CD14-positive monocyte (primary cell): ENCODE measurements at regions of chr10 and their contacts with region 1.

Region 1: DNA sequence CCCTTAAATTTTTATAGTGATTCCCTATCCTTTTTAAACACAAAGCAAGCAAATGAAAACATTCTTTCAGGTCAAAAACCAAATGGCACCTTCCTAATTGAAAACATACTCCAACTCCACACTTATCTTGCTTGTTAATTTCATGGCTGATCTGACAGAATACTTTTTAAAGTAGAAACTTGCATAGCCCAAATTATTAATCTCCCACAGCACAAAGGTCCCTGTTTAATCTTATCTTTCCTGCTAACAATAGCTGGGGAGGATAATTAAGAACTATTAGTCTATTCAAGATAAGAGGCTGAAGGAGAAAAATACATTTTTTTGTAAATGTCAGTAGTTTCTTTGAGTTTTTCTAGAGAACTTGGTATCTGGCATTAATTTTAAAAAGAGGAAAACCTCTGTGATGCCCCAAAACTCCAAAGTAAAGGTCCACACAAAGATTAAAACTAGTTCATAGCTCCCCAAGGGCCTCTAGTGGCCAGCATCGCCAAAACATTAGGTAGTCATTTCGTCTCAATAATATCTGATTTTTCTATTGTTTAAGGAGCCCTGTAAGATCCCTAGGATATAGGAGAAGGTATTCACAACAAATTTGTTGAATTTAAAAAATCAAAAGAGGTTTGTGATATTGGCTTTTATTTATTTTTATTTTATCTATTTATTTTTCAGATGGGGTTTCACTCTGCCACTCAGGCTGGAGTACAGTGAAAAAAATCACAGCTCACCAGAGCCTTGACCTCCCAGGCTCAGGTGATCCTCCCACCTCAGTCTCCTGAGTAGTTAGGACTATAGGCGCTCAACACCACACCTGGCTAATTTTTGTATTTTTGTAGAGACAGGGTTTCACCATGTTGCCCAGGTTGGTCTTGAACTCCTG is 14.7 kb downstream of the CDNF start:
- DNase-seq: peak; percentile 16 to 43 (median 31)
- H3K4me3 ChIP-seq: no peak overlapping the region
- H3K4me3 Mint-ChIP-seq: no peak overlapping the region
- H3K27ac ChIP-seq: no peak overlapping the region
- H3K27ac Mint-ChIP-seq: no peak overlapping the region
- H3K4me1 ChIP-seq: peaks cover 12% of the 10 kb centered on the region in 2 donors
- H3K4me1 Mint-ChIP-seq: peaks cover 22% of the 10 kb centered on the region
- H3K27me3 ChIP-seq: no peaks in the 10 kb centered on the region
- H3K27me3 Mint-ChIP-seq: peaks cover 0 to 3% (median 0%) of the 10 kb centered on the region in 3 donors
- CTCF ChIP-seq: peak; percentile 66

Region 2: GRCh38 chr10:14507176-14507575 is 315.9 kb before region 1 on chr10:
- intact Hi-C with region 1: loop called in 1 of 2 experiments (anchors 10 kb)
- DNase-seq: no peak
- H3K4me3 ChIP-seq: no peak overlapping the region
- H3K4me3 Mint-ChIP-seq: no peak overlapping the region
- H3K27ac ChIP-seq: no peak overlapping the region
- H3K27ac Mint-ChIP-seq: no peak overlapping the region
- H3K4me1 ChIP-seq: no peaks in the 10 kb centered on the region
- H3K4me1 Mint-ChIP-seq: peaks cover 4% of the 10 kb centered on the region
- H3K27me3 ChIP-seq: no peaks in the 10 kb centered on the region
- H3K27me3 Mint-ChIP-seq: peaks cover 0 to 1% (median 0%) of the 10 kb centered on the region in 3 donors
- CTCF ChIP-seq: no peak

Region 3: GRCh38 chr10:14536241-14537213 is 286.6 kb before region 1 on chr10:
- intact Hi-C with region 1: loop called (anchors 10 kb)
- DNase-seq: peak; percentile 49 to 69 (median 66)
- H3K4me3 ChIP-seq: no peak overlapping the region
- H3K4me3 Mint-ChIP-seq: no peak overlapping the region
- H3K27ac ChIP-seq: peak overlapping the region in 1 of 2 donors; percentile 39
- H3K27ac Mint-ChIP-seq: peak overlapping the region in 6 of 7 donors; percentile 3 to 88 (median 42)
- H3K4me1 ChIP-seq: peaks cover 5 to 8% of the 10 kb centered on the region in 2 donors
- H3K4me1 Mint-ChIP-seq: peaks cover 22% of the 10 kb centered on the region
- H3K27me3 ChIP-seq: no peaks in the 10 kb centered on the region
- H3K27me3 Mint-ChIP-seq: no peaks in the 10 kb centered on the region
- CTCF ChIP-seq: peak; percentile 68

Region 4: GRCh38 chr10:14604181-14605142 is 218.7 kb before region 1 on chr10:
- intact Hi-C with region 1: loop called in 1 of 2 experiments (anchors 5 kb)
- DNase-seq: peak; percentile 61 to 84 (median 82)
- H3K4me3 ChIP-seq: peak overlapping the region; percentile 75 to 100 (median 81)
- H3K4me3 Mint-ChIP-seq: peak overlapping the region; percentile 97 to 98
- H3K27ac ChIP-seq: peak overlapping the region; percentile 68 to 96
- H3K27ac Mint-ChIP-seq: peak overlapping the region; percentile 98 to 100 (median 99)
- H3K4me1 ChIP-seq: peaks cover 62 to 64% of the 10 kb centered on the region in 2 donors
- H3K4me1 Mint-ChIP-seq: peaks cover 64% of the 10 kb centered on the region
- H3K27me3 ChIP-seq: no peaks in the 10 kb centered on the region
- H3K27me3 Mint-ChIP-seq: peaks cover 0 to 3% (median 0%) of the 10 kb centered on the region in 3 donors
- CTCF ChIP-seq: no peak

Region 5: DNA sequence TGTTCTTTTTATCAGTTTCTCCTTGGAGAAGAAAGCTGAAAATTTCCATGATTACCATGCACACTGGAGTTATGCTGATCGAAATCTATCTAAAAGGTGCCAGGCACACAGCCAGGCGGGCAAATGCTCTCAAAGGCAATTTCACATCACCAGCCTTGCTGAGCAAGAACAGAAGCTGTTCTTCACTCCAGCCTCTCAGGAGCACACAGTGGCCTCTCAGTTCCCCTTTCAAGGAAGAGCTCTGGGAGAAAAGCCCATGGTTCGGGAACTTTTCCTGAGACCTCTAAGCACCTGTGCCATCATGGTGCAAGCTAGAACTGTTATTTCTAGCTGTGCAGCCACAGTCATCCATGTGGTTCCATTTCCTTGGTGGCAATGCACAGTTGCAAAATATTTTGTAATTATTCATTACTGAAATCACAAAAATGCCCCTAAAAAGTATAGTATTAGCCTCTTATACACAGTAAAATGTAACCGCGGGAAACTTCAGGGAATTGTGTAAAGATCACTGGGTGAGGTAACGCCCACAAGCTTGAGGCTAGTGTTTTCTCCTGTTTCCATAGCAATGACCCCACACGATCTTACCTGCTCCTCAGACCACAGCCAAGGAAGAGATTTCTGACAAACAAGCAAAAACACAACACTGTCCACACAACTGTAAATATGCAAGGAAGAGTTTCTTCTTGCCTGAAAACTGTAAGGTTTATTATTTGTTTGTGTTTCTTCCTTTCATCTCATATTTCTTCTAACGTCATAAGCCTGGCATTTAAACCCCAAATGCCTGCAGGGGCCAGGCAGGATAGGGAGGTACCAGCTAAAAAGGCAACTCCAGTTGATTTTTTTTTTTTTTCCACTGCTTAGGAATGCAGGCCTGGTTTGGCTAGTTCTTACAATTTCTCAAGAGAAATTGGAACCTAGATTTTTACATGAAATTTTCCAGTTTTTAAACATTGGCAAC is 169.6 kb before region 1 on chr10:
- intact Hi-C with region 1: loop called in 1 of 2 experiments (anchors 10 kb)
- DNase-seq: peak; percentile 54 to 78 (median 61)
- H3K4me3 ChIP-seq: peak overlapping the region in 1 of 3 experiments; percentile 5
- H3K4me3 Mint-ChIP-seq: peak overlapping the region in 1 of 2 donors; percentile 26
- H3K27ac ChIP-seq: peak overlapping the region; percentile 43 to 60
- H3K27ac Mint-ChIP-seq: peak overlapping the region; percentile 34 to 91 (median 72)
- H3K4me1 ChIP-seq: peaks cover 61 to 68% of the 10 kb centered on the region in 2 donors
- H3K4me1 Mint-ChIP-seq: peaks cover 68% of the 10 kb centered on the region
- H3K27me3 ChIP-seq: no peaks in the 10 kb centered on the region
- H3K27me3 Mint-ChIP-seq: no peaks in the 10 kb centered on the region
- CTCF ChIP-seq: no peak

Region 6: GRCh38 chr10:14761372-14761771 is 61.7 kb before region 1 on chr10:
- intact Hi-C with region 1: loop called in 1 of 2 experiments (anchors 5 kb)
- DNase-seq: no peak
- H3K4me3 ChIP-seq: no peak overlapping the region
- H3K4me3 Mint-ChIP-seq: peak overlapping the region in 1 of 2 donors; percentile 55
- H3K27ac ChIP-seq: no peak overlapping the region
- H3K27ac Mint-ChIP-seq: peak overlapping the region in 2 of 7 donors; percentile 63 to 76
- H3K4me1 ChIP-seq: peaks cover 16 to 20% of the 10 kb centered on the region in 2 donors
- H3K4me1 Mint-ChIP-seq: peaks cover 18% of the 10 kb centered on the region
- H3K27me3 ChIP-seq: no peaks in the 10 kb centered on the region
- H3K27me3 Mint-ChIP-seq: peaks cover 0 to 3% (median 0%) of the 10 kb centered on the region in 3 donors
- CTCF ChIP-seq: no peak

Region 7: DNA sequence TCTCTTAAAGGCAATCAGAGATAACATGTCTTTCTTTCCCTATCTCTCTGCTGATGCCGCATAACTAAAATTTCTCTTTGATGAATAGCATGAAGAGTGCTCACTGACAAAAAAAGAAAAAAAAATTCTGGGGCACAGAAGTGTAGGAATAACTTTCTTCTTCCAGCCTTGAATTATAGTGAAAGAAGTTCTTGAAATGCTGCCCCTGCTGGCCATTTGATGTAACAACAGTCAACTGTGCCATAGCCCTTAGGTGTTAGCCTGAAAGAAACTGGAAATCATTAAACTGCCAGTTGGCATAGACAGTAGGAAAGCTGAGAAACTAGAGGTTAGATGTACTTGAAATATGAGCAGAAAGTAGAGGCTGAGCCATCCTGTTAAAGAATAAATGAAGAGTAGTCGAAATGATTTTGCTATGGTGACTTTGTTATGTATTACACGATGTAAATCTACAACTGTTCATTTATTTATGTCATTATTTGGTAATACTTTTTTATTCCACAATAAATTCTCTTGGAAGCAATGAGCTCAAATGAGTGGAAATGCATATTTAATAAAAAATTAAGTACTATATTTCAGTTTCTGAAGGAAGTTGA is 596.3 kb after region 1 on chr10:
- intact Hi-C with region 1: no loop called
- DNase-seq: peak in 1 of 3 donors; percentile 17
- H3K4me3 ChIP-seq: no peak overlapping the region
- H3K4me3 Mint-ChIP-seq: no peak overlapping the region
- H3K27ac ChIP-seq: no peak overlapping the region
- H3K27ac Mint-ChIP-seq: no peak overlapping the region
- H3K4me1 ChIP-seq: no peaks in the 10 kb centered on the region
- H3K4me1 Mint-ChIP-seq: peaks cover 2% of the 10 kb centered on the region
- H3K27me3 ChIP-seq: no peaks in the 10 kb centered on the region
- H3K27me3 Mint-ChIP-seq: peaks cover 0 to 2% (median 0%) of the 10 kb centered on the region in 3 donors
- CTCF ChIP-seq: peak; percentile 95